Heart right ventricle (tissue), 16 donors: ENCODE measurements at regions of chr10 and their contacts with region 1.

Region 1: GRCh38 chr10:74058658-74059057 is 60.7 kb downstream of the VCL start:
- DNase-seq: no peak
- ATAC-seq: peak in 5 of 8 donors; percentile 18 to 62 (median 34)
- H3K4me3 ChIP-seq: no peak overlapping the region
- H3K27ac ChIP-seq: peak overlapping the region in 5 of 10 donors; percentile 16 to 83 (median 74)
- H3K4me1 ChIP-seq: peaks cover 3 to 66% (median 52%) of the 10 kb centered on the region in 9 donors
- H3K27me3 ChIP-seq: no peaks in the 10 kb centered on the region
- CTCF ChIP-seq: peak in 6 of 9 donors; percentile 12 to 46 (median 28)

Region 2: DNA sequence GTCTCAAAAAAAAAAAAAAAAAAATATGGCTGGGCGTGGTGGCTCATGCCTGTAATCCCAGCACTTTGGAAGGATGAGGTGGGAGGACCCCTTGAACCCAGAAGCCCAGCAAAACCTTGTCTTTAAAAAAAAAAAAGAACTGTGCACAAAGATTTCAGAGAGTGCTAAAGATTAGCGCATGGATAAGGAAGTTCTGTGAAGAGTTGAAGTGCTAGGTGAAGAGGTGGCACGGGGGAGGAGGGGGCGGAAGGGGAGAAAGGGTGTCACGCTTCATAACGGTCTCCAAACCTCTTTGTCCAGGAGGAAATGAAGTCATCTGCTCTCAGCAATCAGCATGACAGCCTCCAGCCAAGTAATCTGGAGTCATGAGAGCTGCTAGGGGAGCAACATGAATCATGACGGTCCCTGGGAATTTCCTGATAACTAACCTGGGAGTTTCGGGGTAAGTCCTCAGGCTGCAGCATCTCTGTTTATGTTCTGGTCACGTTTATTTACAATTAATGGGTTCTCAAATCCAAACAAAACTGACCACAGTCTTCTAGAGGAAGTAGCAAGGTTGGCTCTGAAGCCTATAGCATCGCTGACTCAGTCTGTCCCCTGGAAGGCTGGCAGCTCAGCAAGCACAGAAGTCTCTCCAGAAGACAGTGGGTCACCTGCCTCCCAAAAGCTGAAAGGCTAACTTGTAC is 149.7 kb before region 1 on chr10:
- intact Hi-C with region 1: no loop called
- DNase-seq: peak in 1 of 2 donors; percentile 69
- ATAC-seq: peak in 7 of 8 donors; percentile 5 to 57 (median 32)
- H3K4me3 ChIP-seq: peak overlapping the region in 3 of 10 donors; percentile 10 to 15 (median 13)
- H3K27ac ChIP-seq: peak overlapping the region in 9 of 10 donors; percentile 53 to 95 (median 88)
- H3K4me1 ChIP-seq: peaks cover 5 to 87% (median 50%) of the 10 kb centered on the region in 9 donors
- H3K27me3 ChIP-seq: peaks cover 0 to 14% (median 0%) of the 10 kb centered on the region in 7 donors
- CTCF ChIP-seq: no peak

Region 3: GRCh38 chr10:74008212-74008731 is 50.4 kb before region 1 on chr10:
- intact Hi-C with region 1: loop called in 1 of 10 experiments (anchors 10 kb)
- DNase-seq: no peak
- ATAC-seq: no peak
- H3K4me3 ChIP-seq: peak overlapping the region in 1 of 10 donors; percentile 5
- H3K27ac ChIP-seq: peak overlapping the region in 7 of 10 donors; percentile 14 to 80 (median 70)
- H3K4me1 ChIP-seq: peaks cover 11 to 93% (median 82%) of the 10 kb centered on the region in 9 donors
- H3K27me3 ChIP-seq: no peaks in the 10 kb centered on the region
- CTCF ChIP-seq: no peak